ENCODE measurements at regions of chr18 and their contacts with region 1.

Region 1: DNA sequence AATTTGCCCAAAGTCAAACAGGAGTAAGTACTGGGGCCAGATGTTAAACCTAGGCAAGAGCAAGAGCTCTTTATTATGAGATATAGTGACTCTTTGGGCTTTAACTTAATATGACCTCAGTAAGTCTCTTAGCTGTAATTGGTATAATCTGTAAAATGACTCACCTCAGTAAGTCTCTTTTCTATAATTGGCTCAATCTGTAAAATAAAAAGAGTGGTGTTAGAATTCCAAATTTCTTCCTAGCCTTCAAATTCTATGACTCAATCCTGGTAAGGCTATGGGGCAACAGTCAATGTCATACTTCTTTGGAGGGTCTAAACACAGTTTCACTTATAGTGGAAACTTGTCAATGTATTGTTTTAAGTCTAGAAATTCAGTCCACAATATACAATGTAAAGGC is 1608.9 kb upstream of the PIK3C3 start:
- DNase-seq: no peak
- H3K4me3 Mint-ChIP-seq: no peak overlapping the region
- H3K27ac Mint-ChIP-seq: no peak overlapping the region
- H3K4me1 Mint-ChIP-seq: no peaks in the 10 kb centered on the region
- H3K27me3 Mint-ChIP-seq: no peaks in the 10 kb centered on the region

Region 2: DNA sequence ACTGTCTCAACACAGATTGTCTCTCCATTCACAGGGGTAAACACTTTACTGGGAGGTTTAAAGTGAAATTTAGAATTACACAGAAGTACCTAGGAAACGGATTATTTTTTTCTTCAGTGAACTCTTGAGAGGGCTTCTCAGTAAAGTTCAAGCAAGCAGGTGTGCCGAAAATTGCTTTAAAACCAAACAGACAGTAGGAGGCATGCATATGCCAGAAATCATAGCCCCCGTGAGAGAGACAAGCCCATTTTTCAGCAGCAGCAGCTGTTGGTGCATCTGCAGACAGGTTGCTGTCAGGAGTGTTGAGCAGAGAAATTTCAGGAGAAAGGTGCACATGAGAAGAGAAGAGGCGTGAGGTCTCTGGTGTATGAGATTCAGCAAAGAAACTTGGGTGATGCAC is 665.1 kb before region 1 on chr18:
- intact Hi-C with region 1: no loop called
- DNase-seq: no peak
- H3K4me3 Mint-ChIP-seq: no peak overlapping the region
- H3K27ac Mint-ChIP-seq: no peak overlapping the region
- H3K4me1 Mint-ChIP-seq: no peaks in the 10 kb centered on the region
- H3K27me3 Mint-ChIP-seq: no peaks in the 10 kb centered on the region

Region 3: GRCh38 chr18:40283560-40283959 is 62.6 kb before region 1 on chr18:
- intact Hi-C with region 1: loop called (anchors 10 kb)
- DNase-seq: no peak
- H3K4me3 Mint-ChIP-seq: no peak overlapping the region
- H3K27ac Mint-ChIP-seq: no peak overlapping the region
- H3K4me1 Mint-ChIP-seq: no peaks in the 10 kb centered on the region
- H3K27me3 Mint-ChIP-seq: no peaks in the 10 kb centered on the region